Left lung (tissue), 14 donors: ENCODE measurements at regions of chr6 and their contacts with region 1.

Region 1: DNA sequence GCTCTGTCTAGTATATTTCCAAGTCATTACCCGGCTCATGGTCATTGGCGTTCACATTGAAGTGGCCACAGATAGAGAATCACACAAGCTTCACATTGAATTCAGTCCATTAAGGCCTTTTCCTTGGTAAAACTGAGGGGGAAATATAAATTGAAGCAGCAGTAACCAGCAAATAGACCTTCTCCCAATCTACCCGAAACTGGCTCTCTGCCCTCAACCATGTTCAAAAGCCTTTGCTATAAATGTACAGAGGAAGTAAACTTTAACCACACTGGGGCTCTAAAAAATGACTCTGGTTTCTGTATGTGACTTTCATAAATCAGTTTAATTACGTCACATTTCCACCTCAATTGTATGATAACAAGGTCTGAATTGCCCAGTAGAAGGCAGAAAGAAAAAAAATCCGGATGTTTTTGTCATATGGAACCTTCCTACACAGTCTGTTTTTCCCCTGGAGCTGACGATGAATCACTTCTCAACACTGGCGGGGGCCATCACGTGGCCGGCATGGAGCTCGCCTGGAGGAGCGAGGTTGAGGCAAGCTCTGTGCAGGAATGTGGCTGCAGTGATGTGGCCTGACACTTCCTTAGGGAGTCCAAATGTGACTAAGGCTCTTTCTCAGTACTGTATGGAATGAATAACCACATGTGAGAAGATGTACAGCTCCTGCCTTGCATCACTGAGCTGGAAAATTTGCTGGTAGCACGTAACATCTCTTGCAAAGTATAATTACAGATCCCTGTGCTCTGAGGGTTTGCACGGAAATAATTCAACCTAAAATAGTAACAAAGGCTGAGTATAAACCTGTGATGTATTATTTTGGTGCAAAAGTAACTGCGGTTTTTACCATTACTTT is 58.6 kb upstream of the SNX9 start:
- DNase-seq: peak; percentile 41 to 94 (median 78)
- ATAC-seq: peak; percentile 80
- H3K4me3 ChIP-seq: no peak overlapping the region
- H3K27ac ChIP-seq: peak overlapping the region; percentile 69 to 76
- H3K4me1 ChIP-seq: peaks cover 24 to 62% of the 10 kb centered on the region in 2 donors
- H3K27me3 ChIP-seq: no peaks in the 10 kb centered on the region
- CTCF ChIP-seq: no peak

Region 2: GRCh38 chr6:157813757-157814455 is 49.5 kb after region 1 on chr6:
- intact Hi-C with region 1: no loop called
- DNase-seq: no peak
- ATAC-seq: peak; percentile 74
- H3K4me3 ChIP-seq: no peak overlapping the region
- H3K27ac ChIP-seq: peak overlapping the region; percentile 2 to 81
- H3K4me1 ChIP-seq: peaks cover 0 to 5% of the 10 kb centered on the region in 2 donors
- H3K27me3 ChIP-seq: no peaks in the 10 kb centered on the region
- CTCF ChIP-seq: no peak

Region 3: GRCh38 chr6:158072083-158072721 is 307.8 kb after region 1 on chr6:
- intact Hi-C with region 1: loop called in 1 of 2 experiments (anchors 10 kb)
- DNase-seq: peak; percentile 68 to 88 (median 74)
- ATAC-seq: peak; percentile 70
- H3K4me3 ChIP-seq: no peak overlapping the region
- H3K27ac ChIP-seq: no peak overlapping the region
- H3K4me1 ChIP-seq: peaks cover 6 to 27% of the 10 kb centered on the region in 2 donors
- H3K27me3 ChIP-seq: no peaks in the 10 kb centered on the region
- CTCF ChIP-seq: peak; percentile 70 to 71